ENCODE measurements at regions of chr9 and their contacts with region 1.

Region 1: DNA sequence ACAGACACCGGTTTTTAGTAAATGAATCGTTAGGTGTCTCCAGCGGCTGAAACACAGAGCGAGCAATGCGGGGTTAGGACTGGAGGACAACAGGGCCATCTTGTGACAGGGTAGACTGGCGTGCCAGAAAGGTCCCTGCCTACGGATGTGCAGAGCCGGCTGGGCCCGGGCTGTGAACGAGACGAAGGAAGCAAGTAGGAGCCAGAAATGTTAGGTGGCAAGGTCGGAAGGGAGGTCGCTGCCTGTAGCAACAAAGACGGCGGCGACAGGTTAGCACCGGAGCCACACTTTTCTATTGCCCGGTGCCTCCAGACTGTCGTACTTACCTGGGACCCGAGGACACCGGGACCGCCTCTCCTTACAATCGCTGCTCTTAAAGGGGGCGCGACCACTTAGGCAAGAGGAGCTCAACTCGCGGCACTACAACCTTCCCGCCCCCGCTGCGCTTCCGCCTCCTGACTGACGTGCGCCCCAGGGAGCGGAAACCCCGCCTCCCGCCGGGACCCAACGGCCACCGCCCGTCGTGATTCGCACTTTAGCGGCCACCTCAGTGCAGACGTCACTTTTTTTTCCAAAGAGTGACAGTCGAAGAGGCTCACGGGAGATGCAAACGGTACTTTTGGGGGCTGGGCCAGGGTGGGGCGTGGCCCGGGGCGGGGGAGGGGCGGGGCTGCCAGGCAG is at the start of gene INIP:
- DNase-seq: peak; percentile 91 to 99 (median 98)
- ATAC-seq: peak; percentile 94
- H3K4me3 ChIP-seq: peak within 1 kb of the TSS; percentile 82
- H3K4me3 Mint-ChIP-seq: peak within 1 kb of the TSS; percentile 83 to 100 (median 96)
- H3K27ac ChIP-seq: peak within 1 kb of the TSS; percentile 96
- H3K27ac Mint-ChIP-seq: peak within 1 kb of the TSS; percentile 96 to 100 (median 99)
- H3K4me1 ChIP-seq: peaks cover 10% of the 10 kb centered on the region in 2 donors
- H3K4me1 Mint-ChIP-seq: peaks cover 14 to 39% (median 28%) of the 10 kb centered on the region in 7 donors
- H3K27me3 ChIP-seq: no peaks in the 10 kb centered on the region
- H3K27me3 Mint-ChIP-seq: no peaks in the 10 kb centered on the region
- total RNA-seq, gene INIP: 13.8 to 35.0 (median 28.3) TPM

Region 2: GRCh38 chr9:111631071-111631971 is 1086.5 kb before region 1 on chr9 and contains the start of gene DNAJC25:
- CTCF ChIA-PET with region 1: no interaction called
- POLR2A ChIA-PET with region 1: no interaction called
- intact Hi-C with region 1: loop called (anchors 1 to 5 kb)
- DNase-seq: peak; percentile 94 to 98 (median 97)
- ATAC-seq: peak; percentile 97
- H3K4me3 ChIP-seq: peak within 1 kb of the TSS; percentile 82
- H3K4me3 Mint-ChIP-seq: peak within 1 kb of the TSS; percentile 81 to 99 (median 94)
- H3K27ac ChIP-seq: peak within 1 kb of the TSS; percentile 83
- H3K27ac Mint-ChIP-seq: peak within 1 kb of the TSS; percentile 78 to 95 (median 89)
- H3K4me1 ChIP-seq: peaks cover 14 to 21% of the 10 kb centered on the region in 2 donors
- H3K4me1 Mint-ChIP-seq: peaks cover 29 to 57% (median 47%) of the 10 kb centered on the region in 7 donors
- H3K27me3 ChIP-seq: no peaks in the 10 kb centered on the region
- H3K27me3 Mint-ChIP-seq: no peaks in the 10 kb centered on the region
- total RNA-seq, gene DNAJC25: 4.0 to 6.0 (median 5.2) TPM

Region 3: GRCh38 chr9:112097712-112098688 is 619.8 kb before region 1 on chr9:
- CTCF ChIA-PET with region 1: no interaction called
- POLR2A ChIA-PET with region 1: no interaction called
- intact Hi-C with region 1: loop called (anchors 5 to 10 kb)
- DNase-seq: peak; percentile 41 to 85 (median 68)
- ATAC-seq: peak; percentile 93
- H3K4me3 ChIP-seq: no peak overlapping the region
- H3K4me3 Mint-ChIP-seq: no peak overlapping the region
- H3K27ac ChIP-seq: no peak overlapping the region
- H3K27ac Mint-ChIP-seq: peak overlapping the region in 1 of 9 donors; percentile 15
- H3K4me1 ChIP-seq: peaks cover 0 to 4% of the 10 kb centered on the region in 2 donors
- H3K4me1 Mint-ChIP-seq: peaks cover 2 to 32% (median 12%) of the 10 kb centered on the region in 7 donors
- H3K27me3 ChIP-seq: no peaks in the 10 kb centered on the region
- H3K27me3 Mint-ChIP-seq: peaks cover 0 to 3% (median 0%) of the 10 kb centered on the region in 5 donors

Region 4: DNA sequence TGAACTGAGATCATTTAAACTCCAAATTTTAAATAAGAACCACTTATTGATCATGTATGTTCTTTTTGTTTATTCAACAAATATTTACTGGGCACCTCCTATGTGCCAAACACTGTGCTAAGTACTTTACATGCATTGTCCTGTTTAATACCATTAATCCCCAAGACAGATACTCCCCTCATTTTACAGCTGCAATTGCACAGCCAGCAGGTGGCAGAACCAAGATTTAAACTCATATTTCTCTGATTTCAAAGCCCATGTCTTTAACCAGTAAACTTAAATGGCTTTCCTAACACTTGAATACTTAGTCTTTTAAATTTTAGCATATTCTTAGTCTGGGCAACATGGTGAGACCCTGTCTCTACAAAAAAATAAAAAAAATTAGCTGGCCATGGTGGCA is 274.6 kb before region 1 on chr9:
- CTCF ChIA-PET with region 1: interaction called, 4 read pairs
- POLR2A ChIA-PET with region 1: no interaction called
- intact Hi-C with region 1: loop called (anchors 1 kb)
- DNase-seq: peak in 6 of 9 donors; percentile 16 to 37 (median 28)
- ATAC-seq: no peak
- H3K4me3 ChIP-seq: no peak overlapping the region
- H3K4me3 Mint-ChIP-seq: no peak overlapping the region
- H3K27ac ChIP-seq: no peak overlapping the region
- H3K27ac Mint-ChIP-seq: peak overlapping the region in 1 of 9 donors; percentile 10
- H3K4me1 ChIP-seq: no peaks in the 10 kb centered on the region
- H3K4me1 Mint-ChIP-seq: peaks cover 0 to 10% (median 0%) of the 10 kb centered on the region in 7 donors
- H3K27me3 ChIP-seq: no peaks in the 10 kb centered on the region
- H3K27me3 Mint-ChIP-seq: no peaks in the 10 kb centered on the region

Region 5: DNA sequence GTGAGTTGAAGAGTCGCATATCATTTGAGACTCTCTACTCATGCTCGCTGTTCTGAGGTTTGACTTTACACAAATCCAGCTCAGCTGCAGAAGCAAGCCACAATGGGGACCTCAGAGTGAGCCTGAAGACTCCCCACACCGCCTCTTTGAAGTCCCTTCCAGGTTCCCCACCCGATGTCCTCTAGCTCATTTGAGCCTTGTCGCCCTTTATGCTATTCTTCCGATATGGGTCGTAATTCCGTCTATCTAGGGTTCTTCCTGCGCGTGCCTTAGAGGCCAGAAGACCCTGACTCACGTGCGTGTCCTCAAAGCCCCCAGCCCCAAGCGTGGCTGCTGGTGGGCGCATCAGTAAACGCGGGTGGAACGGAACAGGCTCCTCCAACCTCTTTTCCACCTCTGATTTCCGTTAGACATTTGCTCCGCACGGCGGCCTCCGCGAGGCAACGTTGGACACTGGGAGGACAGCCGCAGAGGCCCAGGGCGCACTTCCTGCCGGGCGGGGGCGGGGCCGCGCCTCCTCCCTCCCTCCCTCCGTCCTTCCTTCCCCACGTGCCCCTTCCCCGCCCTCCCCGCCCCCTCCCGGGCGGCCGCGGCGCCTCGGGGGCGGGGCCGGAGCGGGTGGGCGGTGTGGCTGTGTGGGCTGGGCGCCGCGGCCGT is 32.4 kb after region 1 on chr9 and contains the start of gene SNX30:
- CTCF ChIA-PET with region 1: interaction called, 3 read pairs
- POLR2A ChIA-PET with region 1: interaction called, 45 read pairs
- intact Hi-C with region 1: loop called (anchors 1 kb)
- DNase-seq: peak; percentile 66 to 83 (median 75)
- ATAC-seq: peak; percentile 94
- H3K4me3 ChIP-seq: peak within 1 kb of the TSS; percentile 70
- H3K4me3 Mint-ChIP-seq: peak within 1 kb of the TSS; percentile 88 to 94 (median 92)
- H3K27ac ChIP-seq: peak within 1 kb of the TSS; percentile 68
- H3K27ac Mint-ChIP-seq: peak within 1 kb of the TSS; percentile 88 to 98 (median 96)
- H3K4me1 ChIP-seq: peaks cover 46% of the 10 kb centered on the region in 2 donors
- H3K4me1 Mint-ChIP-seq: peaks cover 39 to 66% (median 60%) of the 10 kb centered on the region in 7 donors
- H3K27me3 ChIP-seq: no peaks in the 10 kb centered on the region
- H3K27me3 Mint-ChIP-seq: peaks cover 0 to 4% (median 0%) of the 10 kb centered on the region in 5 donors
- total RNA-seq, gene SNX30: 6.6 to 15.8 (median 9.2) TPM

Region 6: GRCh38 chr9:113150670-113151611 is 433.1 kb after region 1 on chr9 and contains the start of gene SLC31A2:
- CTCF ChIA-PET with region 1: no interaction called
- POLR2A ChIA-PET with region 1: no interaction called
- intact Hi-C with region 1: loop called in 1 of 2 experiments (anchors 5 kb)
- DNase-seq: peak; percentile 73 to 93 (median 80)
- ATAC-seq: peak; percentile 92
- H3K4me3 ChIP-seq: peak within 1 kb of the TSS; percentile 78
- H3K4me3 Mint-ChIP-seq: peak within 1 kb of the TSS; percentile 58 to 88 (median 84)
- H3K27ac ChIP-seq: peak within 1 kb of the TSS; percentile 73
- H3K27ac Mint-ChIP-seq: peak within 1 kb of the TSS; percentile 38 to 76 (median 68)
- H3K4me1 ChIP-seq: peaks cover 10 to 15% of the 10 kb centered on the region in 2 donors
- H3K4me1 Mint-ChIP-seq: peaks cover 16 to 42% (median 36%) of the 10 kb centered on the region in 7 donors
- H3K27me3 ChIP-seq: no peaks in the 10 kb centered on the region
- H3K27me3 Mint-ChIP-seq: peaks cover 1 to 6% (median 4%) of the 10 kb centered on the region in 5 donors
- total RNA-seq, gene SLC31A2: 5.3 to 39.2 (median 5.4) TPM